ENCODE measurements at regions of chr2 and their contacts with region 1.

Region 1: GRCh38 chr2:102753563-102754159 is 8.2 kb upstream of the TMEM182 start:
- DNase-seq: peak in 1 of 2 donors; percentile 12
- ATAC-seq: peak; percentile 50

Region 2: GRCh38 chr2:102240640-102241370 is 512.9 kb before region 1 on chr2:
- intact Hi-C with region 1: no loop called
- DNase-seq: peak; percentile 89 to 95
- ATAC-seq: peak; percentile 97

Region 3: DNA sequence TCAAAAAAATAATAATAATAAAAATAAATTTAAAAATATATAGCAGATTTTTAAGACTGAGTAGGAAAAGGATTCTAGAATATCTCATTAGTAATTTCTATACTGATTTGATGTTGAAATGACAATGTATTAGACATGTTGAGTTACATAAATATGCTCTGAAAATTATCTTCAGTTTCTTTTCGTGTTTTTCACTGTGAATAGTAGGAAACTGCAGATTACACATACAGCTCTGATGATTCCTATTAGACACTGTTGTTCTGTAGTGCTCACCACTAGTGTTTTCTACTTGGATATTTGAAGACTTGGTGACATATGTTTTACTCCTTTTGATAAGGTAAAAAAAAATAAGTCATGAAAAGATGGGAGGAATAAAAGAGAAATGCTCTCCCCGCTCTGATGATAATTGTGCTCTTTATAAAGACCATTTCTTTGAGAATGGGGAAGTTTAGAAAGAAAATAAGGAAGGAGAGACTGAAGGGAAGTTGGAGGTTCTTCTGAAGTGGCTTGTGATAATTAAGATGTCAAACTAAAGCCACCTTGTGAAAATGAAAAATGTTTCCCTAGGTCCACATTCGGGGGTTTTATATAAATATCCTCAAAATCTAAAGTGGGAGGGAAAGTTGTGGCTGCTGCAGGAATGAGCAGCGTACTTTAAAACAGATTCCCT is 81.4 kb before region 1 on chr2:
- intact Hi-C with region 1: no loop called
- DNase-seq: no peak
- ATAC-seq: no peak

Region 4: GRCh38 chr2:102806250-102806837 is 52.7 kb after region 1 on chr2:
- intact Hi-C with region 1: loop called in 1 of 2 experiments (anchors 2 kb)
- DNase-seq: peak; percentile 54 to 67
- ATAC-seq: peak; percentile 69

Measured in left colon (tissue), 2 donors.